Activated T-helper 2 cell treated with anti-CD3 and anti-CD28 coated beads, Interferon-gamma antibody, Interleukin-2, Interleukin-4, amounts not matched to agents 10 μg/mL and 5 μg/mL and 100 μg/mL, durations not matched to agents 14 hours and 24 hours and 36 hours (primary cell): ENCODE measurements at regions of chr10 and their contacts with region 1.

Region 1: GRCh38 chr10:76126607-76127527 is 695.4 kb downstream of the LRMDA start:
- DNase-seq: no peak
- H3K4me3 Mint-ChIP-seq: no peak overlapping the region
- H3K27ac Mint-ChIP-seq: no peak overlapping the region
- H3K4me1 Mint-ChIP-seq: no peaks in the 10 kb centered on the region
- H3K27me3 Mint-ChIP-seq: no peaks in the 10 kb centered on the region

Region 2: DNA sequence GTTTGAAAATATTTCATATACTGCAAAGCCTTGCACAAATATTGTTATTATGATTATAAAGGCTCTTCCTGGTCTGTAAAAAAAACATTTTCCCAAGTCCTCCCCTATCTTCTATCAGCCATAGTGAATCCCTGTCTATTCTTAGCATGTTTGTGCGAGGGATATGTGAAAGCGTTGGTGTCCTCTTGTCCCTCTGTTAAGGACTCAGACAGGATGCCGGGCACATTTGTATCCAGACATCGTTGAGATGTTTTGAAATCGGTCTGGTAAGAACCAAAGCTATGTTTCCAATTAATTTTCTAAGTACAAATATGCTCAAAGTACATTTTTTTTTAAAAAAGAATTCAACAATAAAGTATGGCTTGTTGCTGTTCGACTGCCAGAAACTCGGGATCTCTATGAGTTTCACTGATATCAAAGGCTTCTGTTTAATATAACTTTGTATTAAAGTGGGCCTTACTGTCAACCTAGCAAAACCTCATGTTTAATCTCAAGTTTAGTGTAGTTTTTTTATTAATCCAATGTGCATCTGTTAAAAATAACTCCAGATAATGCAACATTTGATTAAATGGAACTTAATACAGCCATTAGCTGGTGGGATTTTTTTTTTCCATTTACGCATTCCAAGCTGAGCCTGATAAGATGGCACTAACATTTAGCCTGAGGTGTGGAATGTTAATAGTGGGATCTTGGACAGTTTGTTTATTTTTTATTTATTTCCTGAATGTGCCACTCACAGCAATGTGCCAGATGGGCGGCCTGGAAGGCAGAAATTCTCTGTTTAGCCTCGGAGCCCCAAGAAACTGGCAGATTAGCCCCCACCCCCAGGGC is 58.8 kb after region 1 on chr10:
- intact Hi-C with region 1: loop called (anchors 10 kb)
- DNase-seq: no peak
- H3K4me3 Mint-ChIP-seq: no peak overlapping the region
- H3K27ac Mint-ChIP-seq: no peak overlapping the region
- H3K4me1 Mint-ChIP-seq: no peaks in the 10 kb centered on the region
- H3K27me3 Mint-ChIP-seq: no peaks in the 10 kb centered on the region